CD8-positive, alpha-beta T cell (primary cell): ENCODE measurements at regions of chr4 and their contacts with region 1.

Region 1: GRCh38 chr4:109433205-109434006 is at the start of gene SEC24B:
- DNase-seq: peak; percentile 78 to 95 (median 91)
- ATAC-seq: peak; percentile 92
- H3K4me3 ChIP-seq: peak within 1 kb of the TSS; percentile 72
- H3K4me3 Mint-ChIP-seq: peak within 1 kb of the TSS; percentile 90
- H3K27ac ChIP-seq: peak within 1 kb of the TSS; percentile 73 to 90
- H3K27ac Mint-ChIP-seq: peak within 1 kb of the TSS; percentile 95
- H3K4me1 ChIP-seq: peaks cover 29% of the 10 kb centered on the region
- H3K4me1 Mint-ChIP-seq: peaks cover 49% of the 10 kb centered on the region
- H3K27me3 ChIP-seq: no peaks in the 10 kb centered on the region
- H3K27me3 Mint-ChIP-seq: no peaks in the 10 kb centered on the region
- CTCF ChIP-seq: peak; percentile 97
- total RNA-seq, gene SEC24B: 40.6 to 42.9 TPM

Region 2: GRCh38 chr4:108620101-108620932 is 813.1 kb before region 1 on chr4 and contains the start of gene RPL34:
- CTCF ChIA-PET with region 1: no interaction called
- POLR2A ChIA-PET with region 1: no interaction called
- intact Hi-C with region 1: loop called in 1 of 2 experiments (anchors 10 kb)
- DNase-seq: peak; percentile 94 to 100 (median 97)
- ATAC-seq: peak; percentile 98
- H3K4me3 ChIP-seq: peak within 1 kb of the TSS; percentile 92 to 97
- H3K4me3 Mint-ChIP-seq: peak within 1 kb of the TSS; percentile 93
- H3K27ac ChIP-seq: peak within 1 kb of the TSS; percentile 85 to 90
- H3K27ac Mint-ChIP-seq: peak within 1 kb of the TSS; percentile 96
- H3K4me1 ChIP-seq: peaks cover 50% of the 10 kb centered on the region
- H3K4me1 Mint-ChIP-seq: peaks cover 58% of the 10 kb centered on the region
- H3K27me3 ChIP-seq: no peaks in the 10 kb centered on the region
- H3K27me3 Mint-ChIP-seq: no peaks in the 10 kb centered on the region
- CTCF ChIP-seq: no peak
- total RNA-seq, gene RPL34: 3,253 to 3,442 TPM

Region 3: DNA sequence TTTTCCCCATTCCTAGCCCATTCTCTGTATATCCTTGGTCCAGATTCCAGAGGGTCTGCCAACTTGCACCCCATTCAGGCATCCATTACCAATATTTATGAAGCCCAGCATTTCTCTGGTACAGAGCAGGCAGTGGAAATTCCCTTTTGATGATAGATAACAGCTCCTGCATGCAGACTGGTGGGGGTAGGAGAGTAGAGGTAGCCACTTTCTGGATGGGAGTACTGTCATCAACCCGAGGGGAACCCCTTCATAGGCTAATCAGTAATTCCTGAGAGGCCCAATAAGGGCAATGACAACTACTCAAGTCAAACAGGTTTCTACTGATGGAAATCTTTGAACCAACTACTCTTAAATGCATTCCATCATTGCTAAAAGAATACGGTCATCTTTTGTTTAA is 194.7 kb before region 1 on chr4:
- CTCF ChIA-PET with region 1: no interaction called
- POLR2A ChIA-PET with region 1: no interaction called
- intact Hi-C with region 1: no loop called
- DNase-seq: no peak
- ATAC-seq: no peak
- H3K4me3 ChIP-seq: no peak overlapping the region
- H3K4me3 Mint-ChIP-seq: no peak overlapping the region
- H3K27ac ChIP-seq: no peak overlapping the region
- H3K27ac Mint-ChIP-seq: no peak overlapping the region
- H3K4me1 ChIP-seq: no peaks in the 10 kb centered on the region
- H3K4me1 Mint-ChIP-seq: no peaks in the 10 kb centered on the region
- H3K27me3 ChIP-seq: no peaks in the 10 kb centered on the region
- H3K27me3 Mint-ChIP-seq: peaks cover 4% of the 10 kb centered on the region
- CTCF ChIP-seq: no peak

Region 4: DNA sequence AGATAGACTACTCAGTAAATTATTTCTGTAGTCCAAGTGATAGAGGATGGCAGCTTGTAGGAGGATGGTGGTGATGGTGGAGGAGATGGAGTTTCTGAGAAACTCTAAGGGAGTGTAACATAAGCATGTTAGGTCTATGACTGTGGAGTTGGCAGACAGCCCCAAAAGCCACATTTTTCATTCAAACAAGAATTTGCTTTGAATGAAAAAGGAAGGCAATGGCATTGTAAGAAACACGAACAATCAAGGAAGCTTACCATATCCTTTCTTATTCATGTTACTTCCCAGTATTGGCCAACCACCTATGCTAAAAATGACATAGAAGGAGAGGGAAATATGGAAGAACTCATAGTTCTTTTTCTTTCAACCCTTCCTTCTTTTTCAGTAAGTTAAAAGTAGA is 18.5 kb before region 1 on chr4:
- CTCF ChIA-PET with region 1: no interaction called
- POLR2A ChIA-PET with region 1: no interaction called
- intact Hi-C with region 1: no loop called
- DNase-seq: no peak
- ATAC-seq: no peak
- H3K4me3 ChIP-seq: no peak overlapping the region
- H3K4me3 Mint-ChIP-seq: no peak overlapping the region
- H3K27ac ChIP-seq: no peak overlapping the region
- H3K27ac Mint-ChIP-seq: no peak overlapping the region
- H3K4me1 ChIP-seq: no peaks in the 10 kb centered on the region
- H3K4me1 Mint-ChIP-seq: no peaks in the 10 kb centered on the region
- H3K27me3 ChIP-seq: no peaks in the 10 kb centered on the region
- H3K27me3 Mint-ChIP-seq: no peaks in the 10 kb centered on the region
- CTCF ChIP-seq: no peak

Region 5: GRCh38 chr4:109472343-109472761 is 38.9 kb after region 1 on chr4:
- CTCF ChIA-PET with region 1: interaction called, 3 read pairs
- POLR2A ChIA-PET with region 1: interaction called, 4 read pairs
- intact Hi-C with region 1: loop called (anchors 5 kb)
- DNase-seq: no peak
- ATAC-seq: no peak
- H3K4me3 ChIP-seq: no peak overlapping the region
- H3K4me3 Mint-ChIP-seq: no peak overlapping the region
- H3K27ac ChIP-seq: no peak overlapping the region
- H3K27ac Mint-ChIP-seq: no peak overlapping the region
- H3K4me1 ChIP-seq: no peaks in the 10 kb centered on the region
- H3K4me1 Mint-ChIP-seq: peaks cover 64% of the 10 kb centered on the region
- H3K27me3 ChIP-seq: no peaks in the 10 kb centered on the region
- H3K27me3 Mint-ChIP-seq: no peaks in the 10 kb centered on the region
- CTCF ChIP-seq: no peak

Region 6: DNA sequence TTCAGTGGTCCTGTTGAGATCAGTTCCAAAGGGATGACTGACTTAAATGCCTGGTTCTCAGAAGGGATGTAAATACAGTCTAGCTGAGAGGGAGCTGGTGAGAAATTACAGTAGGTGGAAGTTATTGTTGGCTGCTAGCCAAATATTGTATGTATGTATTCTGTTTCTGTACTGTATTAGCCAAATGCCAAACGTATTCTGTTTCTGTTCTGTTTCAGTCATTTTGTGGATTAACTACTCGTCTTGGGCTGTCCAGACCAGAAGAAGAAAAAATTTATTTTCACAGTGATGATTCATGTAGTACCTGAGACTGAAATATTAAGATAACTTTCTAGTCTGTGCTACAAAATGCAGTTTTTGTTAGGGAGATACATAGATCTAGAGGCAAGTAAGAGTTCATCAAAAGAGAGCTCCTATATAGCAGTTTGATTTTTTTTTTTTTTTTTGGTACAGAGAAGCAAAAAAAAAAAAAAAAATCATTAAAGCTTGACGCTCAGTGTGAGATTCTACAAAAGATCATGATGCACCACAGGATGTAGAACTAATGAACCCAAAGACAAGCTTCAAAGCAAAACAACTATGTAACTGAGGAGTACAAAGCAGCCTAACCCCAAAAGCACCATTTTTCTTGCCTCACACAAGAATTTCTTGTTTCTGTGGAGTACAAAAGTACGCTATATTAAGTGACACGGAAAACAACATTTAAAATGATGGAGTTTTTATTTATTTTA is 215.0 kb after region 1 on chr4:
- CTCF ChIA-PET with region 1: interaction called, 4 read pairs
- POLR2A ChIA-PET with region 1: interaction called, 4 read pairs
- intact Hi-C with region 1: loop called in 1 of 2 experiments (anchors 2 kb)
- DNase-seq: peak in 4 of 9 experiments; percentile 23 to 87 (median 56)
- ATAC-seq: peak; percentile 85
- H3K4me3 ChIP-seq: peak overlapping the region in 1 of 2 experiments; percentile 29
- H3K4me3 Mint-ChIP-seq: peak overlapping the region; percentile 76
- H3K27ac ChIP-seq: peak overlapping the region; percentile 45 to 61
- H3K27ac Mint-ChIP-seq: peak overlapping the region; percentile 92
- H3K4me1 ChIP-seq: peaks cover 73% of the 10 kb centered on the region
- H3K4me1 Mint-ChIP-seq: peaks cover 41% of the 10 kb centered on the region
- H3K27me3 ChIP-seq: no peaks in the 10 kb centered on the region
- H3K27me3 Mint-ChIP-seq: no peaks in the 10 kb centered on the region
- CTCF ChIP-seq: no peak

Region 7: GRCh38 chr4:109729718-109730618 is 296.6 kb after region 1 on chr4 and contains the start of gene PLA2G12A:
- CTCF ChIA-PET with region 1: interaction called, 5 read pairs
- POLR2A ChIA-PET with region 1: interaction called, 6 read pairs
- intact Hi-C with region 1: loop called (anchors 1 to 2 kb)
- DNase-seq: peak; percentile 65 to 91 (median 81)
- ATAC-seq: peak; percentile 93
- H3K4me3 ChIP-seq: peak within 1 kb of the TSS; percentile 89 to 92
- H3K4me3 Mint-ChIP-seq: peak within 1 kb of the TSS; percentile 90
- H3K27ac ChIP-seq: peak within 1 kb of the TSS; percentile 69 to 78
- H3K27ac Mint-ChIP-seq: peak within 1 kb of the TSS; percentile 90
- H3K4me1 ChIP-seq: peaks cover 17% of the 10 kb centered on the region
- H3K4me1 Mint-ChIP-seq: peaks cover 27% of the 10 kb centered on the region
- H3K27me3 ChIP-seq: no peaks in the 10 kb centered on the region
- H3K27me3 Mint-ChIP-seq: no peaks in the 10 kb centered on the region
- CTCF ChIP-seq: no peak
- total RNA-seq, gene PLA2G12A: 7.8 to 10.2 TPM

Region 8: DNA sequence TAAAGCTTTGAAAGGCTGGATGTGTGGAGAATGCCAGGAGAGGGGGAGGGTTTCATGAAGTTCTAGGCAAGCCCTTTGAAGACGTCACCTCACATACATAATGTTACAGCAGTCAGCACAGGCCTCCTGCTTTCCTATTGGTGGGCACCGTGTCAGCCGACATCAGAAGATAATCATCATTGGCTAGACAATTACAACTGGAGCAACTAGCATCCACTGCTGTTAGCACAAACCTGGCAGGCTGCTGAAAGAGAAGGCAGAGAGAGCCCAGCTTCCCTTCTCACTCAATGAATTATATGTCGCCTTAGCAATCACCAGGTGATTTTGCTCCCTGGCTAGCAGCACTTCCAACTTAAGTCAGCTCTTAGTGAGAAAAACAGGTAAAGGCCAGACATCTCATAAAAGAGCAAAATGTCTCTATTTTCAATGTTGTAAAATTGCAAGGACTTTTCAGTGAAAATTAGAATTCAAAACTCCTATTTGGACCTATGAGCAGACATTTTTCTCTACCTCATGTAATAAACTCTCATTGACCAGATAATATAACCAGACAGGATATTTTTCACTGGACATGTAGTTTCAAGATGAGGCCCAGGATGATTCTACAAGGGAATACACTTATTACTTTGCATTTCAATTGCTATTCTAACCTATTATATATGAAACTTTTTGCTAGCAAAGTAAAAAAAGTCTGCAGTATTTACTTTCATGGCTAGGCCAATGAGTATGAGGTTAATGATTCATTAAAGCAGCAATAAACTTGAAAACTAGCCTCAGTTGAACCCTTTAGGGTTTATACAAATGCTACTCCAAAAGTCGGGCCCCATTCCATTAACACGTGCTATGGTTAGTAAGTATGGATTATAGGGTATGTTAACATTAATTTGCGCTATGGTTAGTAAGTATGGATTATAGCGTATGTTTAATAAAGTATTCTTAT is 760.7 kb after region 1 on chr4:
- CTCF ChIA-PET with region 1: no interaction called
- POLR2A ChIA-PET with region 1: no interaction called
- intact Hi-C with region 1: loop called (anchors 5 to 10 kb)
- DNase-seq: peak; percentile 47 to 90 (median 71)
- ATAC-seq: peak; percentile 86
- H3K4me3 ChIP-seq: no peak overlapping the region
- H3K4me3 Mint-ChIP-seq: no peak overlapping the region
- H3K27ac ChIP-seq: peak overlapping the region; percentile 1 to 63
- H3K27ac Mint-ChIP-seq: peak overlapping the region; percentile 90
- H3K4me1 ChIP-seq: peaks cover 15% of the 10 kb centered on the region
- H3K4me1 Mint-ChIP-seq: peaks cover 36% of the 10 kb centered on the region
- H3K27me3 ChIP-seq: no peaks in the 10 kb centered on the region
- H3K27me3 Mint-ChIP-seq: no peaks in the 10 kb centered on the region
- CTCF ChIP-seq: no peak